ENCODE measurements at regions of chr17 and their contacts with region 1.

Region 1: DNA sequence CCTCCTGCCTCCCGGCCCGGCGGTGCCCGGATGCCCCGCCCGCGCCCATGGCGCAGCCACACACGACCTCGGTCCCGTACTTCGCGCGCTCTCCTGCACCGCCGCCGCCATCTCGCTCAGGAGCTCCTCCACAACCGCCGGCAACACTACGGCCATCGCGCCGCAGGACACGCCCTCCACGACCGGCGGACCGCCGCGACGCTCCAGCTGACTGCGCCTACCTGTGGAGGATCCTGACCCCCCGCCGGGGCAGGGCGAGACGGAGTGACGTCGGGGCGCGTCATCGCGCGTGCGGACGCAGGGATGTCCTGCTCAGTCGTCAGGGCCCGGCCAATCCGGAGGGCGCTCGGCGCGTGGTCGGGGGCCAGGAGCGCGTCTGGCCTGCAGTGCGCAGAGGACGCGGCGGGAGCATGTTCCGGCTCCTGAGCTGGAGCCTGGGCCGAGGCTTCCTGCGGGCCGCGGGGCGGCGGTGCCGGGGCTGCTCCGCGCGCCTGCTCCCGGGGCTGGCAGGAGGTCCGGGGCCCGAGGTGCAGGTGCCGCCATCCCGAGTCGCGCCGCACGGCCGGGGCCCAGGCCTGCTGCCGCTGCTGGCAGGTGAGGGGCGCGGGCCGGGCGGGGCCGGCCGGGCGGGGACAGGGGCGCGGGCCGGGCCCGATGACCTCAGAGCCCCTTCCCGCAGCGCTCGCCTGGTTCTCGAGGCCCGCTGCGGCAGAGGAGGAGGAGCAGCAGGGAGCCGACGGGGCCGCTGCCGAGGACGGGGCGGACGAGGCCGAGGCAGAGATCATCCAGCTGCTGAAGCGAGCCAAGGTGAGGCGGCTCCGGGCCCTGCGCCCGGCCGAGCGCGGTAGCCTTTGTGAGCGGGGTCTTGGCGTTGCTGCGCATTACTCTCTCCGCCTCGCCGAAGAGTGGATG is at the starts of genes TTC19 and ZSWIM7:
- DNase-seq: peak; percentile 85 to 98
- H3K4me3 ChIP-seq: peak within 1 kb of the TSS; percentile 85
- H3K27ac ChIP-seq: peak within 1 kb of the TSS; percentile 97
- H3K4me1 ChIP-seq: peaks cover 21% of the 10 kb centered on the region
- H3K27me3 ChIP-seq: no peaks in the 10 kb centered on the region
- CTCF ChIP-seq: no peak
- total RNA-seq, gene TTC19: 53.5 and 74.7 TPM in 2 replicates
- total RNA-seq, gene ZSWIM7: 13.0 and 19.1 TPM in 2 replicates

Region 2: DNA sequence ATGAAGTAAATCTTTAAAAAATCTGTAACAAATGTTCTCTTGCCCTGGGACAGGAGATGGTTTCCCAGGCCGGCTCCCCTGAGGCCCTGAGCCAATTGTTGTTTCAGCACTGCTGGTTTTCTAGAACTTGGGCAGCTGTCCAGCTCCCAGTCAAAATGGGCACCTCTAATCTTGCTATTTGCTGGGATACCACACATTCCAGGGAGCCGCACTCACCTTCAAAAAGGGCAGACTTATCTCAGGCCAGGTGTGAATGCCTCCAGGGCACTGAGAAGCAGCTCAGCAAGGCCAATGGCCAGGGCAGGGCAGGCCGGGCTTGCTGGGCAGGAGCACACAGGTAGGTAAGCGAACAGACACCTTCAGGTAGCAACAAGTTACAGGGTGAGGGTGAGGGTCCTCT is 340.0 kb before region 1 on chr17:
- CTCF ChIA-PET with region 1: no interaction called
- POLR2A ChIA-PET with region 1: interaction called, 22 read pairs
- intact Hi-C with region 1: no loop called
- DNase-seq: peak; percentile 96 to 97
- H3K4me3 ChIP-seq: no peak overlapping the region; the same call in 1 of the 2 replicates
- H3K27ac ChIP-seq: peak overlapping the region; percentile 98
- H3K4me1 ChIP-seq: peaks cover 55% of the 10 kb centered on the region
- H3K27me3 ChIP-seq: no peaks in the 10 kb centered on the region
- CTCF ChIP-seq: no peak

Region 3: GRCh38 chr17:15944759-15945529 is 54.8 kb before region 1 on chr17 and contains the start of gene ADORA2B:
- CTCF ChIA-PET with region 1: interaction called, 8 read pairs
- POLR2A ChIA-PET with region 1: interaction called, 15 read pairs
- intact Hi-C with region 1: loop called (anchors 1 kb)
- DNase-seq: peak; percentile 51 to 84
- H3K4me3 ChIP-seq: peak within 1 kb of the TSS; percentile 91
- H3K27ac ChIP-seq: peak within 1 kb of the TSS; percentile 92
- H3K4me1 ChIP-seq: peaks cover 26% of the 10 kb centered on the region
- H3K27me3 ChIP-seq: no peaks in the 10 kb centered on the region
- CTCF ChIP-seq: peak; percentile 30; the same call in 1 of the 2 replicates
- total RNA-seq, gene ADORA2B: 32.6 and 42.7 TPM in 2 replicates

Region 4: GRCh38 chr17:15981208-15981607 is 18.5 kb before region 1 on chr17:
- CTCF ChIA-PET with region 1: no interaction called
- POLR2A ChIA-PET with region 1: interaction called, 5 read pairs
- intact Hi-C with region 1: loop called (anchors 1 kb)
- DNase-seq: peak in 1 of 2 experiments; percentile 93
- H3K4me3 ChIP-seq: peak overlapping the region; percentile 10; the same call in 1 of the 2 replicates
- H3K27ac ChIP-seq: peak overlapping the region; percentile 93
- H3K4me1 ChIP-seq: peaks cover 42% of the 10 kb centered on the region
- H3K27me3 ChIP-seq: no peaks in the 10 kb centered on the region
- CTCF ChIP-seq: no peak

Region 5: GRCh38 chr17:16013943-16014407 is 14.3 kb after region 1 on chr17:
- CTCF ChIA-PET with region 1: no interaction called
- POLR2A ChIA-PET with region 1: no interaction called
- intact Hi-C with region 1: no loop called
- DNase-seq: no peak
- H3K4me3 ChIP-seq: no peak overlapping the region
- H3K27ac ChIP-seq: no peak overlapping the region
- H3K4me1 ChIP-seq: no peaks in the 10 kb centered on the region
- H3K27me3 ChIP-seq: no peaks in the 10 kb centered on the region
- CTCF ChIP-seq: peak; percentile 55